H1 (cell line): ENCODE measurements at regions of chr17 and their contacts with region 1.

Region 1: GRCh38 chr17:56913864-56914640 is at the start of gene TRIM25:
- DNase-seq: peak in 1 of 2 experiments; percentile 83
- H3K4me3 ChIP-seq: peak within 1 kb of the TSS; percentile 49 to 79 (median 72)
- H3K27ac ChIP-seq: no peak within 1 kb of the TSS
- H3K4me1 ChIP-seq: peaks cover 3 to 9% (median 6%) of the 10 kb centered on the region in 4 experiments; a peak in 6 of 7 replicates
- H3K27me3 ChIP-seq: peaks cover 0 to 21% (median 17%) of the 10 kb centered on the region in 4 experiments; a peak in 6 of 7 replicates
- CTCF ChIP-seq: no peak
- EP300 ChIP-seq: no peak
- POLR2A ChIP-seq: peak; percentile 81 to 94
- RAD21 ChIP-seq: no peak
- total RNA-seq, gene TRIM25: 37.3 and 38.9 TPM in 2 replicates

Region 2: DNA sequence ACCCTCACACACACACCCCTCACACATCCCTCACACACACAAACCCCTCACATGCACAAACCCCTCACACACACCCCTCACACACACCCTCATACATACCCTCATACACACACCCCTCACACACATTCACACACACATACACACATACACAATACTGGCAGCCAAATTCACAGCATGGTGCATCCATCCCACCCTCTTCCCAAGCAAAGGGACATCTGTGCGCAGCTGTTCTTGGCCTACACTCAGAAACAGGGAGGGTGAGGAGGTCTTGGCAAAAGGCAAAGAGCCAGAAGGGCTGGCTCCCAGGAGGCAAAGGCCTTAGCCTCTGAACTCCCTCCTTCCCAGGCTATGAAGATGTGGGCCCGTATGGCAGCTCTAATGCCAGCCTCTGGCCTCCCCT is 103.7 kb before region 1 on chr17:
- CTCF ChIA-PET with region 1: no interaction called
- POLR2A ChIA-PET with region 1: no interaction called
- DNase-seq: no peak
- H3K4me3 ChIP-seq: no peak overlapping the region
- H3K27ac ChIP-seq: no peak overlapping the region
- H3K4me1 ChIP-seq: no peaks in the 10 kb centered on the region
- H3K27me3 ChIP-seq: no peaks in the 10 kb centered on the region
- CTCF ChIP-seq: no peak
- EP300 ChIP-seq: no peak
- POLR2A ChIP-seq: no peak
- RAD21 ChIP-seq: no peak

Region 3: GRCh38 chr17:56925088-56925487 is 11.0 kb after region 1 on chr17:
- CTCF ChIA-PET with region 1: interaction called, 3 read pairs
- POLR2A ChIA-PET with region 1: interaction called, 11 read pairs
- DNase-seq: no peak
- H3K4me3 ChIP-seq: no peak overlapping the region
- H3K27ac ChIP-seq: no peak overlapping the region
- H3K4me1 ChIP-seq: peaks cover 3 to 12% (median 6%) of the 10 kb centered on the region in 4 experiments; a peak in 5 of 7 replicates
- H3K27me3 ChIP-seq: no peaks in the 10 kb centered on the region
- CTCF ChIP-seq: no peak
- EP300 ChIP-seq: no peak
- POLR2A ChIP-seq: no peak
- RAD21 ChIP-seq: no peak